GM10248 (cell line): ENCODE measurements at regions of chr10 and their contacts with region 1.

Region 1: DNA sequence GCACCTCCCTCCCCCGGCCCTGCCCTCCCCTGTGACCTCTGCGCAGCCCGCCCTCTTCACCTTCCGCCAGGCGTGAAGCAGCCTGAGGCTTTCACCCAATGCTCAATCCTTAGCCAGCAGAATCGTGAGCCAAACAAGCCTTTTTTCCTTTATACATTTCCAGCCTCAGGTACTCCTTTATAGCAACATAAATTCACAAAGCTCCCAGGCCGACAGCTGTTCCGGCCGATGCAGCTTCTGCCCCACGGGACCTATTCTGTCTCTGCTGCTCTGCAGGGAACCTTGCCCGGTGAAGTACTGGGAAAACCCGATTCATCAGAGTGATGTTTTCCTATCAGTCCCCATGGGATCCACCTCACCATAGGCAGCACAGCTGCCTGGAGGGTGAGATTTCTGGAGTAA is 87.4 kb downstream of the CHST15 start:
- DNase-seq: no peak
- CTCF ChIP-seq: no peak

Region 2: GRCh38 chr10:123994417-123995081 is 11.4 kb before region 1 on chr10:
- CTCF ChIA-PET with region 1: interaction called, 17 read pairs
- POLR2A ChIA-PET with region 1: no interaction called
- DNase-seq: peak; percentile 89
- CTCF ChIP-seq: peak; percentile 98